BJ (cell line): ENCODE measurements at regions of chr9 and their contacts with region 1.

Region 1: GRCh38 chr9:93111371-93112115 is 15.5 kb downstream of the CARD19 start:
- DNase-seq: no peak
- H3K4me3 ChIP-seq: no peak overlapping the region
- H3K27me3 ChIP-seq: no peaks in the 10 kb centered on the region
- CTCF ChIP-seq: no peak

Region 2: DNA sequence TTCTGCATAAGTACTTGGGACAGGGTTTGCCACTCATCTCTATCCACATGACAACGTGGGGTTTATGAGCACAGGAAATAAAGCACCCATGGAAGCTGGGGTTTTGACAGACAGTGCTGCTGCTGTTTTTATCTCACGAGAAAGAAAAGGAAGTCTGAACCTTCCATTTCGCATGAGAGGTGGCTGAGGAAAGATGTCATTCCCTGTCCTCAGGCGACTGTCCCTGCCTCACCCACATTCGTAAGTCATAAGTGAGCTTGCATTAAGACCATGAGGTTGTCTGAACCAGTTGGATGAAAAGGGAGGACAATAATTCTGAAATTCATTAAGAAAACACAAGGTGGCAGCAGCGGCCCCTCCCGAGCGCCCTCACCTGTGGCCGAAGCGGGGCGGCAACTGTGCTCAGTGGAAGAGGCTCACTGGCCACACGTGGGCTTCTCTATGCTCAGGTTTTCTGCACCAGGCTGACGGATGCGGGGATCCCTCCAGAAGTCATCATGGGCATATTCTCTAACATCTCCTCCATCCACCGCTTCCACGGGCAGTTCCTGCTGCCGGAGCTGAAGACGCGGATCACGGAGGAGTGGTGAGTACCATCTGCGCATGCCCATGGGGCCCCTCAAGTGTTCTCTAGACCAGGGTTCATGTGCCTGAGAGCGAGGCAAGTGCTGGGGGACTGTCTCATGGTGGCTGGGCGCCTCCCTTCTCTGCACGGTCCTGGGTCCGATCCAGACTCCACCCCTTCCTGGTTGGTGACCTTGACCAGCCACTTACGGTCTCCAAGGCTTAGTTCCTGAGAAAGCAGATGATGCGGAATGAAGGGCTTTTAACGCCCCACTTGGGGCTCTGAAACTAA is 107.8 kb before region 1 on chr9:
- CTCF ChIA-PET with region 1: interaction called, 24 read pairs
- POLR2A ChIA-PET with region 1: no interaction called
- DNase-seq: no peak
- H3K4me3 ChIP-seq: no peak overlapping the region
- H3K27me3 ChIP-seq: no peaks in the 10 kb centered on the region; the same call in 1 of the 2 replicates
- CTCF ChIP-seq: peak; percentile 71

Region 3: GRCh38 chr9:93095205-93096130 is 16.1 kb before region 1 on chr9:
- CTCF ChIA-PET with region 1: interaction called, 28 read pairs
- POLR2A ChIA-PET with region 1: no interaction called
- DNase-seq: peak; percentile 82
- H3K4me3 ChIP-seq: peak overlapping the region; percentile 34
- H3K27me3 ChIP-seq: no peaks in the 10 kb centered on the region
- CTCF ChIP-seq: no peak

Region 4: DNA sequence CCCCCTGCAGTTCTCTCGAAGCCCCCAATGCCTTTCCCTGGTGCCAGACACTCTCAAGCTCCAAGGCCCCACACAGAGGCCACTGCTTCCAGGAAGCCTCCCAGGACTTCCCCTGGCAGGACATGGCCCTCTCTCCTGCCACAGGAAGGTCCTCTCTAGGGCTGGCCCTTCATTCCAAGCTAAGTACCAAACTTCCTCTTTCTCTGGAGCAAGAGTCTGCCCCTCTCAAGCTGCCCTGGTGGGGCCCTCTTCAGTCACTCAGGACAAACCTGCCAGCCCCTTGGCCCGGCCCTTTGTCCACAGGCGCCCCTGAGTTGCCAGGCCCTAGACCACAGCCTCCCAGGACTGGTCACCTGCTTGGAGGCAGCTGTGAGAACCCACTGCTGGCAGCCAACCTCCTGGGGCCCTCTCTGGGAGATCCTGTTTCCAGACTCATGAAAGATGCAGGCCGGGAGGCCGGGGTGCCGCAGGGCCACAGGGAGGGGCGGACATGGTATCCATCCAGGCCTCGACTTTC is 15.9 kb after region 1 on chr9:
- CTCF ChIA-PET with region 1: interaction called, 20 read pairs
- POLR2A ChIA-PET with region 1: no interaction called
- DNase-seq: no peak
- H3K4me3 ChIP-seq: no peak overlapping the region
- H3K27me3 ChIP-seq: no peaks in the 10 kb centered on the region
- CTCF ChIP-seq: no peak

Region 5: GRCh38 chr9:93302551-93303257 is 191.2 kb after region 1 on chr9:
- CTCF ChIA-PET with region 1: interaction called, 11 read pairs
- POLR2A ChIA-PET with region 1: no interaction called
- DNase-seq: no peak
- H3K4me3 ChIP-seq: no peak overlapping the region
- H3K27me3 ChIP-seq: no peaks in the 10 kb centered on the region; the same call in 1 of the 2 replicates
- CTCF ChIP-seq: peak; percentile 67